Prostate gland (tissue), 2 donors: ENCODE measurements at regions of chr9 and their contacts with region 1.

Region 1: GRCh38 chr9:84917366-84918063 is 248.0 kb downstream of the NTRK2 start:
- DNase-seq: no peak
- H3K4me3 ChIP-seq: no peak overlapping the region
- H3K27ac ChIP-seq: no peak overlapping the region
- H3K4me1 ChIP-seq: no peaks in the 10 kb centered on the region
- H3K27me3 ChIP-seq: no peaks in the 10 kb centered on the region
- CTCF ChIP-seq: no peak
- POLR2A ChIP-seq: no peak

Region 2: DNA sequence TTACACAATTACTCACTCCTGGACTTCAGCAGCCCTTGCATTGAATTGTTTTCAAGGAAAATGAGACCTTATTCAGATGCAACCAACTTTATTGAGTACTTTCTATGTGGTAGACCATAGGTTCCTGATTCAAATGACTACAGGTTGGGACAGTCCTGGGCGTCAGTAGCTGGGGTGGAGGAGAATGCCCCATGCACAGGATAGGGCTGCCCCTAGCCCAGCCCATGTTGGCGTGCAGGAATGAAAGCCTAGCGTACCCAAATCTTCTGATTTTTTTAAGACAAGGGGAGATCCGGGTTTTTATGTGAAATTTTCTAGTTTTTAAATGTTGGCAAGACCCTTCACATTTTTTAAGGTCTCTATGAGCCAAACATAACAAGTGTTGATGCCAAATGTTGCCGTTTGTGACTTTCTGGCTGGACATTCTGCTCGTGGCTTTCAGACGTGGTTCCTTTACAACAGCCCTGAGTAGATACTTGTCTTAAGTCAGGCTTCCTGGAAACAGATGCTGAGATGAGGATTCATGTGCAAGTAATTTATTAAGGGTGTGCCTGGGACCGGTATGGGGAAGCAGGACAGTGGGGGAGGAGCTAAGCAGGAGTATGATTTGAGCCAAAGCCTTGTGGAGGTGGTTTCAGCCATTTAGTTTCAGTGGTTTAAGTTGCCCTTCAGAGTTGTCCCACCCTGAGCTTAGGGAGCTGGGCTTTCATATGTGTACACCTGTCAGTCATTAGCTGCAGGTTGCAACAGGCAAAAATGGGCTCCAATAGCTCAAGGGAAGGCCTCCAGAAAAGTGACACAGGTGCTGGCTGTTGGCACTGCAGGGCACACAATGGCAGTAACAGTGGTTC is 93.9 kb before region 1 on chr9:
- intact Hi-C with region 1: loop called (anchors 5 kb)
- DNase-seq: no peak
- H3K4me3 ChIP-seq: no peak overlapping the region
- H3K27ac ChIP-seq: no peak overlapping the region
- H3K4me1 ChIP-seq: no peaks in the 10 kb centered on the region
- H3K27me3 ChIP-seq: no peaks in the 10 kb centered on the region
- CTCF ChIP-seq: no peak
- POLR2A ChIP-seq: no peak

Region 3: GRCh38 chr9:84851935-84852585 is 65.5 kb before region 1 on chr9:
- intact Hi-C with region 1: loop called (anchors 10 kb)
- DNase-seq: peak; percentile 16
- H3K4me3 ChIP-seq: no peak overlapping the region
- H3K27ac ChIP-seq: no peak overlapping the region
- H3K4me1 ChIP-seq: no peaks in the 10 kb centered on the region
- H3K27me3 ChIP-seq: no peaks in the 10 kb centered on the region
- CTCF ChIP-seq: no peak
- POLR2A ChIP-seq: no peak

Region 4: DNA sequence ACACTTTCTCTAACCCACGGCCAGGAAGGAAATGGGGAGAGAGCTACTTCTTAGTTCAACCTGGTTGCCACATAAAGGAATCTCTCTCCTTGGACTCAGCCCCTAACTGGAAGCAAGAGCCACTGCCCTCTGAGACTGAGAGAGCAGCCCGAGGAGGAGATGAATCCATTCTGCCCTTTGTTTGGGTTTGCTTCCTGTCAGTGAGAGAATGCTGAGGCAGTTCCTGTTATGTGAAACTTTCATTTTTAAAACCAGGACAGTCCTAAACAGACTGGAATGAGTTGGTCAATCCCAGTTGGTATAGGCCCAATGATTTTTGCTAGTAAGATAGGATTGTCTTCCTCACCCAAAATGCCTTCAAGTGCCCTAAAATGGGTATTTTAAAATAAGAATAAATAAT is 42.9 kb before region 1 on chr9:
- intact Hi-C with region 1: no loop called
- DNase-seq: no peak
- H3K4me3 ChIP-seq: no peak overlapping the region
- H3K27ac ChIP-seq: no peak overlapping the region
- H3K4me1 ChIP-seq: no peaks in the 10 kb centered on the region
- H3K27me3 ChIP-seq: no peaks in the 10 kb centered on the region
- CTCF ChIP-seq: no peak
- POLR2A ChIP-seq: no peak

Region 5: DNA sequence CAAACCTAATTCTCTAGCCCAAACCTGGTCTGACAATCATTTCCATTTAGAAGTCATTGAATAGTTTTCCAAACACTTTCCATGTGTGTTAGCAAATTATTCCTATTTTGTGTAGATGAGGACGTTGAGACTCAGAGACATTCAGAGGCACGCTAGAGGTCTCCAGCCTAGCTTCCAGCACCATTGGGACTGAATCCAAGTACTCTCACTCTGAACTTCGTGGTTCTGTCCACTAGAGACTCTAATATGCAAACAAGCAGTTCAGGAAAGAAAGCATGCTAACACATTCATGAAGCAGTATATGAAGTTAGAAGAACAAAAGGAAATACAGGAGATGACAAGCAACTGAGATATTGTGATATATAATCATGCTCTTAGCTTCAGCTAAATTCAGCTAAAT is 106.9 kb after region 1 on chr9:
- intact Hi-C with region 1: no loop called
- DNase-seq: no peak
- H3K4me3 ChIP-seq: no peak overlapping the region
- H3K27ac ChIP-seq: no peak overlapping the region
- H3K4me1 ChIP-seq: no peaks in the 10 kb centered on the region
- H3K27me3 ChIP-seq: no peaks in the 10 kb centered on the region
- CTCF ChIP-seq: no peak
- POLR2A ChIP-seq: no peak

Region 6: GRCh38 chr9:85995599-85995998 is 1078.1 kb after region 1 on chr9:
- intact Hi-C with region 1: no loop called
- DNase-seq: no peak
- H3K4me3 ChIP-seq: no peak overlapping the region
- H3K27ac ChIP-seq: no peak overlapping the region
- H3K4me1 ChIP-seq: no peaks in the 10 kb centered on the region
- H3K27me3 ChIP-seq: no peaks in the 10 kb centered on the region
- CTCF ChIP-seq: no peak
- POLR2A ChIP-seq: no peak